ENCODE measurements at regions of chr12 and their contacts with region 1.

Region 1: GRCh38 chr12:1544996-1545700 is 49.2 kb downstream of the FBXL14 start:
- DNase-seq: peak; percentile 68
- ATAC-seq: no peak
- H3K4me3 ChIP-seq: no peak overlapping the region
- H3K27ac ChIP-seq: no peak overlapping the region
- H3K4me1 ChIP-seq: peaks cover 19% of the 10 kb centered on the region
- H3K27me3 ChIP-seq: no peaks in the 10 kb centered on the region
- CTCF ChIP-seq: peak; percentile 66

Region 2: GRCh38 chr12:1282670-1283335 is 262.3 kb before region 1 on chr12:
- CTCF ChIA-PET with region 1: no interaction called
- POLR2A ChIA-PET with region 1: no interaction called
- intact Hi-C with region 1: loop called (anchors 10 kb)
- DNase-seq: no peak
- ATAC-seq: no peak
- H3K4me3 ChIP-seq: no peak overlapping the region
- H3K27ac ChIP-seq: no peak overlapping the region
- H3K4me1 ChIP-seq: peaks cover 10% of the 10 kb centered on the region
- H3K27me3 ChIP-seq: no peaks in the 10 kb centered on the region
- CTCF ChIP-seq: no peak

Region 3: DNA sequence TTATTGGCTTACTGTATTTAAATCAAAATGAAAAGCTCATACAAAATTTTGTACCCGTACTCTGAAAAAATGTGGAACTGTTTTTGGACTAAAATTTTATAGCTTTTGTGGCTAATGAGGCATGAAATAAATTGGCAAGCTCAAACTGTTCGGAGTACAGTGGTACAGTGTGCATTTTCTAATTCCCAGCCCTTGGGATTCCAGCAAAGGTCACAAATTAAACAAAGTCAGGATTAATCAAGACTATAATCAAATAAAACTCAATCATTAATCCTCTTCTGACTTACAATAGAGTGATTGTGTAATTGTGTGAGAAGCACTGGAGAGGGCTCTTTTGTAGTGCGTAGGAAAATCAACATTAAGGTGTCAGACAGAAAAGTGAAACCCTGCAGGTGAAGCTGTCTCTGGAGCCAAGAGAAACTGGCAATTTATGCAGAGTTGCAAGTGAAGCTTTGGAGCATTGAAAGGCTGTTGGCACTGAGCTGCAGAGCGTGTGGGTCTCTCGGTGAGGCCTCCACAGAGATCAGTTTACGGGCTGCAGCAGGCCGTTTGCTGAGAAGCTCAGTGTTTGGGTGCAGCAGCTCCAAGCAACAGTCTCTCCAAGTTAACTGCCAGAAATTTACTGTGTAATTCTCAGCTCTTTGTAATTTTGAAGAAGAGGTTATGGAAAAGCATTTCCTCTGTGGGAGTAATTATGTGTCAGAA is 226.7 kb before region 1 on chr12:
- CTCF ChIA-PET with region 1: no interaction called
- POLR2A ChIA-PET with region 1: interaction called, 5 read pairs
- intact Hi-C with region 1: loop called (anchors 10 kb)
- DNase-seq: peak; percentile 62
- ATAC-seq: peak; percentile 87
- H3K4me3 ChIP-seq: peak overlapping the region; percentile 53
- H3K27ac ChIP-seq: peak overlapping the region; percentile 78
- H3K4me1 ChIP-seq: peaks cover 20% of the 10 kb centered on the region
- H3K27me3 ChIP-seq: no peaks in the 10 kb centered on the region
- CTCF ChIP-seq: no peak

Region 4: GRCh38 chr12:1474041-1474573 is 71.0 kb before region 1 on chr12:
- CTCF ChIA-PET with region 1: no interaction called
- POLR2A ChIA-PET with region 1: no interaction called
- intact Hi-C with region 1: loop called (anchors 10 kb)
- DNase-seq: peak; percentile 95
- ATAC-seq: peak; percentile 89
- H3K4me3 ChIP-seq: peak overlapping the region; percentile 55
- H3K27ac ChIP-seq: peak overlapping the region; percentile 95
- H3K4me1 ChIP-seq: peaks cover 33% of the 10 kb centered on the region
- H3K27me3 ChIP-seq: no peaks in the 10 kb centered on the region
- CTCF ChIP-seq: no peak

Measured in PC-3 (cell line).